ENCODE measurements at regions of chr1 and their contacts with region 1.

Region 1: DNA sequence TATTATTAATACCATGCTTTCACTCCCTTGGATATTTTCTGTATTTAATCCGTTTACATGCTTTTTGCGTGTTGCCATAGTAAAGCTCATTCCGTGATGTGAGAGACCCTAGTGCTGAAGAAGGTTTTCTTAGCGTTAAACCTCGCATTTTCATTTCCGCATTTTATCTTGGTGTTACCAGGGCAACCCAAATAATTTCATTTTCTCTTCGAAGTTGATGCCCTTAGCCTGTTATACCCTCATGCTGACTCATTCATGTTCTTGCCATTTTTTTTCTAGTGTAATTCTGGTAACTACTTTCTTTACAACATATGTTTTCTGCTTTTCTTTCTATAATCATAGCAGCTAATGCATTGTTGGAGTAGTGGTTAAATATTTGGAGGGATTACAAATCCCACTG is 37.2 kb downstream of the LRRC8C start:
- DNase-seq: peak; percentile 53
- CTCF ChIP-seq: no peak

Region 2: GRCh38 chr1:89483010-89483756 is 187.0 kb before region 1 on chr1:
- CTCF ChIA-PET with region 1: no interaction called
- POLR2A ChIA-PET with region 1: no interaction called
- DNase-seq: peak; percentile 56
- CTCF ChIP-seq: peak; percentile 70

Region 3: DNA sequence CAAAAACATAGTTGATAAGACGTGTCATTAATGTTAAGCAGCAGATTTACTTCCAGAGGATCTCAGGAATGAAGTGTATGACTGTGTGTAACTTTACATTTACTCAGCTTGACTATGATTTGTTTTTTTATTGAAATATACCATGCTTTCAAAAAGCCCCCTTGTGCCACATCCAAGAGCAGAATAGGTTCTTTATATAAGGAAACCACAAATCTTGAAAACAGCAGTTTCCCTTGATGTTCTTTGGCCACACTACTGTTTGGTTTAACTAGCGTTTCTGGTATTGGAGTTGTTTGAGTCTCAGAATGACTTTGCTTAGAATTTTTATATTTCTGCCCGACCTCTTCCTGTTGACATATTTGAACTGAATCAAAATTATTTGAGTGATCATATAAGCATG is 12.3 kb before region 1 on chr1:
- CTCF ChIA-PET with region 1: interaction called, 27 read pairs
- POLR2A ChIA-PET with region 1: interaction called, 4 read pairs
- DNase-seq: peak; percentile 10
- CTCF ChIP-seq: no peak

Region 4: GRCh38 chr1:89692601-89693521 is 22.7 kb after region 1 on chr1:
- CTCF ChIA-PET with region 1: interaction called, 13 read pairs
- POLR2A ChIA-PET with region 1: no interaction called
- DNase-seq: peak; percentile 29
- CTCF ChIP-seq: no peak